Activated CD4-positive, alpha-beta T cell treated with anti-CD3 and anti-CD28 coated beads for 36 hours (primary cell): ENCODE measurements at regions of chr1 and their contacts with region 1.

Region 1: DNA sequence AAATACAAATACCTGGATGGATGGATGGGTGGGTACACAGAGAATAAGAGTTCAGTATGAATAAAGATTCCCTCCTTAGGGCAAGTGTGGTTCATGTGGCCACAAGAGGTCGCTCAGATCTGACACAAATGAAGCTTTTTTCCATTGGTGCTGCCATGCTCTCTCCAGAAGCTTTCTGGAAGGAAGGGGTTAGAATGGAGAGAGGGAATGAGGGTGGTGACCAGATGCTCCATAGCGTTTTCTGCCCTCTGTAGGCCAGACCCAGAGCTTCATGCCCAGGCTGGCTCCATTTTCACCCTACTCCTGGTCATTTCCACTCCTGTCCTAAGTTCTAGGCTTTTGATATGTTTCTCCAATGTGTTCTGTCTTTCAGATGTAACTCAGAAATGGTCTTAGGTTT is 3.3 kb upstream of the FCRL6 start:
- DNase-seq: peak; percentile 68
- ATAC-seq: peak; percentile 78
- H3K4me3 Mint-ChIP-seq: no peak overlapping the region
- H3K27ac Mint-ChIP-seq: no peak overlapping the region
- H3K4me1 Mint-ChIP-seq: peaks cover 12% of the 10 kb centered on the region
- H3K27me3 Mint-ChIP-seq: peaks cover 1% of the 10 kb centered on the region

Region 2: DNA sequence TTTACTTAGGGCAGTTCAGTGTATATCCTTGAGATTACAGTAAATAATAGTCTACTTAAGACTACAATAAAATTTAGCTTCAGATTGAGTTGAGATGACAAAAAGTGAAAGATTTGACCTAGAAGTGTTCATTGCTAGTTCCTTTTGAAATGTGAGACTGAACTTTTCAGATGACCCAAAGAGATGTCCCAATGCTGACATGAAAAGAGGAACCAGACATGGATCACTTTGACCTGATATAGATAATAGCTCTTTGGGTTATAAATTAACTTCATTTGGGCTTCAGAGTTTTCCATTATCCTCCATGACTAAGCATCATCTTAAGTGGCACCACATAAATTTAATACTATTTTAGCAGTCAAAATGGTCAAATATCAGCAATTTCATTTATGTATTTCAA is 237.4 kb before region 1 on chr1:
- CTCF ChIA-PET with region 1: no interaction called
- POLR2A ChIA-PET with region 1: no interaction called
- intact Hi-C with region 1: no loop called
- DNase-seq: no peak
- ATAC-seq: no peak
- H3K4me3 Mint-ChIP-seq: no peak overlapping the region
- H3K27ac Mint-ChIP-seq: no peak overlapping the region
- H3K4me1 Mint-ChIP-seq: no peaks in the 10 kb centered on the region
- H3K27me3 Mint-ChIP-seq: peaks cover 6% of the 10 kb centered on the region

Region 3: DNA sequence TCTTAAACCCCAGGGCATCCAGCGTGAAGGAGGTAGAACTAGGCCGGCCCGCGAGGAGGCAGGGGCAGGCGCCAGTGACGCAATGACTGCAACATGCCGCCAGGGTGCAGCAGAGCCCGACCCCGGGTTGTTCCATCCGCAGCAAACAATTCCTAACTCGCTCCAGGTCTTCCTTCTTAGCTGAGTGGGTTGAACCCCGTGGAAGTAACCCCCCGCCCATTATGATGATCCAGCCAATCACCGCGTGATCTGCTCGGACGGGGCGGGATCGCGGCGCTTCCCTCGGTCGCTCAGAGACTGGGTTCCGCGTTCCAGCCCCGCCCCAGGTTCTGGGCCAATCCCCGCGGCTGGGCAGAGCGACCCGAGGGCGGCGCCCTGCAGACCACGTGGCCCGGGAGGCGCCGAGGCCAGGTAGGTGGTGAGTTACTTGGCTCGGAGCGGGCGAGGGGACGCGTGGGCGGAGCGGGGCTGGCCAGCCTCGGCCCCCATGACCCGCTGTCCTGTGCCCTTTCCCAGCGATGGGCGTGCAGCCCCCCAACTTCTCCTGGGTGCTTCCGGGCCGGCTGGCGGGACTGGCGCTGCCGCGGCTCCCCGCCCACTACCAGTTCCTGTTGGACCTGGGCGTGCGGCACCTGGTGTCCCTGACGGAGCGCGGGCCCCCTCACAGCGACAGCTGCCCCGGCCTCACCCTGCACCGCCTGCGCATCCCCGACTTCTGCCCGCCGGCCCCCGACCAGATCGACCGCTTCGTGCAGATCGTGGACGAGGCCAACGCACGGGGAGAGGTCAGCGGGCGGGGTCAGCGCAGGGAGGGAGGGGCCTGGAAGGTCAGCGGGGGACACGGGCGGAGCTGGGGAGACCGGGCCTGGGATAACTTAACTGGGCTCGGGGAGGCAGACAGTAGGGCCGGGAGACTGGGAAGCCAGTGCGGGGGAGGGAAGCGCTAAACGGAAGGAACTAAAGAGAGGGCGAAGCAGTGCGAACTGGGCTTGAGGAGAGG is 18.0 kb before region 1 on chr1 and contains the start of gene DUSP23:
- CTCF ChIA-PET with region 1: interaction called, 14 read pairs
- POLR2A ChIA-PET with region 1: no interaction called
- intact Hi-C with region 1: no loop called
- DNase-seq: peak; percentile 97
- ATAC-seq: peak; percentile 99
- H3K4me3 Mint-ChIP-seq: peak within 1 kb of the TSS; percentile 70
- H3K27ac Mint-ChIP-seq: peak within 1 kb of the TSS; percentile 14
- H3K4me1 Mint-ChIP-seq: peaks cover 12% of the 10 kb centered on the region
- H3K27me3 Mint-ChIP-seq: peaks cover 2% of the 10 kb centered on the region
- total RNA-seq, gene DUSP23: 23.9 to 26.8 TPM

Region 4: GRCh38 chr1:159829273-159829634 is 30.4 kb after region 1 on chr1:
- CTCF ChIA-PET with region 1: interaction called, 12 read pairs
- POLR2A ChIA-PET with region 1: no interaction called
- intact Hi-C with region 1: no loop called
- DNase-seq: peak; percentile 28
- ATAC-seq: peak; percentile 32
- H3K4me3 Mint-ChIP-seq: no peak overlapping the region
- H3K27ac Mint-ChIP-seq: no peak overlapping the region
- H3K4me1 Mint-ChIP-seq: peaks cover 39% of the 10 kb centered on the region
- H3K27me3 Mint-ChIP-seq: no peaks in the 10 kb centered on the region

Region 5: GRCh38 chr1:159879977-159880376 is 81.1 kb after region 1 on chr1:
- CTCF ChIA-PET with region 1: interaction called, 16 read pairs
- POLR2A ChIA-PET with region 1: no interaction called
- intact Hi-C with region 1: no loop called
- DNase-seq: no peak
- ATAC-seq: no peak
- H3K4me3 Mint-ChIP-seq: no peak overlapping the region
- H3K27ac Mint-ChIP-seq: no peak overlapping the region
- H3K4me1 Mint-ChIP-seq: no peaks in the 10 kb centered on the region
- H3K27me3 Mint-ChIP-seq: no peaks in the 10 kb centered on the region

Region 6: DNA sequence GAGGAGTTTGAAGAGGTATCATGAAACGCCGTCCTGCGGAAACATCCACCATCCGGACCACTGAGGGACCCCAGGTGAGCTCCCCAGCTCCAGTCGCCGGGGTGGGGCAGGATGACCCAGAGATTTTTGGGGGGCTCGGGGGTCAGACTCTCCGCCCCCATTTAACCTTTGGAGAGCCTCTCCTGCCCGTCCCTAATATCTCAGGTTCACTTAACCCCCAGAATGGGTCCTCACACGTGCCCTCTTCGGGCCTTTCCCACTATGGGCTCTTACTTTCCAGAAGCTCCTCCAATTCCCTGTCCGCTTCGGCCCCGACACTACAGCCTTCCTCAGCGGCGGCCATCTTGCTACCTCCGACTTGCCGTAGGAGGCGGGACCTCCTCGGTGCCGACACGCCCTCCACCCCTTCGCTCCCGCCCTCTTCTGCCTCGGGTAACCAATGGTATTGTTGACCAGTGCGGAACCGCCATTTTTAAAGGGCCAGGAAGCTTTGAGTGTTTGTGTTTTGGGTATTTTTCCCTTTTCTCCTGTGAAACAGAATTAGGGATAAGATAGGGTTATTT is 486.0 kb after region 1 on chr1 and contains the start of gene PEX19:
- CTCF ChIA-PET with region 1: no interaction called
- POLR2A ChIA-PET with region 1: no interaction called
- intact Hi-C with region 1: no loop called
- DNase-seq: peak; percentile 97
- ATAC-seq: peak; percentile 99
- H3K4me3 Mint-ChIP-seq: peak within 1 kb of the TSS; percentile 86
- H3K27ac Mint-ChIP-seq: peak within 1 kb of the TSS; percentile 94
- H3K4me1 Mint-ChIP-seq: peaks cover 18% of the 10 kb centered on the region
- H3K27me3 Mint-ChIP-seq: no peaks in the 10 kb centered on the region
- total RNA-seq, gene PEX19: 49.2 to 55.8 TPM